HCT116 (cell line): ENCODE measurements at regions of chr6 and their contacts with region 1.

Region 1: GRCh38 chr6:41683510-41684310 is 45.4 kb downstream of the MDFI start:
- DNase-seq: no peak
- ATAC-seq: peak; percentile 85
- H3K4me3 ChIP-seq: no peak overlapping the region
- H3K27ac ChIP-seq: no peak overlapping the region
- H3K4me1 ChIP-seq: peaks cover 4 to 13% of the 10 kb centered on the region in 2 experiments; a peak in 3 of 4 replicates
- H3K27me3 ChIP-seq: no peaks in the 10 kb centered on the region
- CTCF ChIP-seq: peak; percentile 87 to 94 (median 89)
- POLR2A ChIP-seq: no peak
- RAD21 ChIP-seq: peak; percentile 93

Region 2: GRCh38 chr6:41306187-41306854 is 377.4 kb before region 1 on chr6:
- CTCF ChIA-PET with region 1: interaction called, 3 read pairs
- POLR2A ChIA-PET with region 1: no interaction called
- RAD21 ChIA-PET with region 1: no interaction called
- intact Hi-C with region 1: loop called (anchors 1 kb)
- DNase-seq: peak; percentile 58
- ATAC-seq: peak; percentile 84
- H3K4me3 ChIP-seq: peak overlapping the region; percentile 19 to 40; a peak in 3 of 4 replicates
- H3K27ac ChIP-seq: no peak overlapping the region
- H3K4me1 ChIP-seq: 0 out of 4 replicates have a peak, but pooled peaks cover 0 to 8% of the 10 kb centered on the region in 2 experiments
- H3K27me3 ChIP-seq: peaks cover 2% of the 10 kb centered on the region; the same call in 1 of the 2 replicates
- CTCF ChIP-seq: peak; percentile 59 to 73 (median 64); a peak in 5 of 6 replicates
- POLR2A ChIP-seq: no peak
- RAD21 ChIP-seq: peak; percentile 60

Region 3: GRCh38 chr6:41424370-41425058 is 259.2 kb before region 1 on chr6:
- CTCF ChIA-PET with region 1: interaction called, 5 read pairs
- POLR2A ChIA-PET with region 1: no interaction called
- RAD21 ChIA-PET with region 1: no interaction called
- intact Hi-C with region 1: loop called (anchors 1 kb)
- DNase-seq: peak; percentile 66
- ATAC-seq: peak; percentile 62
- H3K4me3 ChIP-seq: no peak overlapping the region
- H3K27ac ChIP-seq: no peak overlapping the region
- H3K4me1 ChIP-seq: peaks cover 18 to 32% of the 10 kb centered on the region in 2 experiments
- H3K27me3 ChIP-seq: no peaks in the 10 kb centered on the region; the same call in 1 of the 2 replicates
- CTCF ChIP-seq: peak; percentile 89 to 94 (median 91)
- POLR2A ChIP-seq: no peak
- RAD21 ChIP-seq: peak; percentile 84

Region 4: GRCh38 chr6:41463062-41463930 is 220.4 kb before region 1 on chr6:
- CTCF ChIA-PET with region 1: no interaction called
- POLR2A ChIA-PET with region 1: no interaction called
- RAD21 ChIA-PET with region 1: no interaction called
- intact Hi-C with region 1: loop called (anchors 2 kb)
- DNase-seq: peak; percentile 27
- ATAC-seq: peak; percentile 85
- H3K4me3 ChIP-seq: no peak overlapping the region
- H3K27ac ChIP-seq: no peak overlapping the region
- H3K4me1 ChIP-seq: peaks cover 6 to 13% of the 10 kb centered on the region in 2 experiments; a peak in 3 of 4 replicates
- H3K27me3 ChIP-seq: no peaks in the 10 kb centered on the region; the same call in 1 of the 2 replicates
- CTCF ChIP-seq: peak; percentile 17 to 71 (median 49); a peak in 5 of 6 replicates
- POLR2A ChIP-seq: no peak
- RAD21 ChIP-seq: peak; percentile 85

Region 5: DNA sequence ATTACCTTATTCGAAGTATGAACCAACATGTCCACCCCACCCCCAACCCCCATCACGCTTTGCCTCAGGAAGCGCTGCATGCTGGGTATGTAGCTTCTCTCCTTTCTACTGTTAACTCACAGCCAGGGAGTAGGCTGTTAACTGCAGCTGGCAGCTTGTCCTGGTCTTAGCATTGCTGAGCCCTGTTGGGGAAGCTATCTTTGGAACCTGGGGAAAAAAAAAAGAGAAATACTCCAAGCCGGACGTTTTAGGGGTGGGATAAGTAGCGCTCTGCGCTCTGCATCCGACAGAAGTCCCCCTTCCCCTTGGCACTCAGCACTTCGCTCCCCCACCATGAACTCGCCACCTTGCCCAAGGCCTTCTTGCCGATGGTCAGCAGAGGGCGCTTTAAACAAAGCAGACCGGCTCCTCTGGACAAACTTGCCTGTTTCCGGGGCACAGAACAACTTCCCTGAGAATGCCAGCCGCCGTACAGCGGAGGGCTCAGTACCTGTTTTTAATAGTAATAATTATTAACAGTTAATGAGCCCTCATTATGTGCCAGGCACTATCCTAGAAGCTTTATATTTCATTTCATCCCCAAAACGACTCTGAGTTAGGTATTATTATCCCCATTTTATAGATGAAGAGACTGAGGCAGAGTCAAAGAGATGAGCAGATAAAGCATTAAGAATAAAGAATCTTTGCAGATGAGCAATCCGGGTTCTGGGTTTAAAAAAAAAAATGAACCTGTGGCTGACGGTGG is 80.7 kb before region 1 on chr6:
- CTCF ChIA-PET with region 1: interaction called, 55 read pairs
- POLR2A ChIA-PET with region 1: interaction called, 5 read pairs
- RAD21 ChIA-PET with region 1: interaction called, 6 to 12 read pairs
- intact Hi-C with region 1: loop called (anchors 1 kb)
- DNase-seq: peak; percentile 81
- ATAC-seq: peak; percentile 82
- H3K4me3 ChIP-seq: peak overlapping the region; percentile 6 to 40
- H3K27ac ChIP-seq: no peak overlapping the region
- H3K4me1 ChIP-seq: peaks cover 3 to 12% of the 10 kb centered on the region in 2 experiments; a peak in 3 of 4 replicates
- H3K27me3 ChIP-seq: no peaks in the 10 kb centered on the region
- CTCF ChIP-seq: peak; percentile 86 to 98 (median 90)
- POLR2A ChIP-seq: peak; percentile 42
- RAD21 ChIP-seq: peak; percentile 96

Region 6: GRCh38 chr6:42963855-42964605 is 1280.3 kb after region 1 on chr6:
- CTCF ChIA-PET with region 1: no interaction called
- POLR2A ChIA-PET with region 1: no interaction called
- RAD21 ChIA-PET with region 1: no interaction called
- intact Hi-C with region 1: no loop called
- DNase-seq: no peak
- ATAC-seq: peak; percentile 77
- H3K4me3 ChIP-seq: no peak overlapping the region
- H3K27ac ChIP-seq: no peak overlapping the region
- H3K4me1 ChIP-seq: peaks cover 10 to 17% of the 10 kb centered on the region in 2 experiments
- H3K27me3 ChIP-seq: no peaks in the 10 kb centered on the region
- CTCF ChIP-seq: peak; percentile 42 to 52 (median 47); a peak in 5 of 6 replicates
- POLR2A ChIP-seq: no peak
- RAD21 ChIP-seq: peak; percentile 75